ENCODE measurements at regions of chr13 and their contacts with region 1.

Region 1: DNA sequence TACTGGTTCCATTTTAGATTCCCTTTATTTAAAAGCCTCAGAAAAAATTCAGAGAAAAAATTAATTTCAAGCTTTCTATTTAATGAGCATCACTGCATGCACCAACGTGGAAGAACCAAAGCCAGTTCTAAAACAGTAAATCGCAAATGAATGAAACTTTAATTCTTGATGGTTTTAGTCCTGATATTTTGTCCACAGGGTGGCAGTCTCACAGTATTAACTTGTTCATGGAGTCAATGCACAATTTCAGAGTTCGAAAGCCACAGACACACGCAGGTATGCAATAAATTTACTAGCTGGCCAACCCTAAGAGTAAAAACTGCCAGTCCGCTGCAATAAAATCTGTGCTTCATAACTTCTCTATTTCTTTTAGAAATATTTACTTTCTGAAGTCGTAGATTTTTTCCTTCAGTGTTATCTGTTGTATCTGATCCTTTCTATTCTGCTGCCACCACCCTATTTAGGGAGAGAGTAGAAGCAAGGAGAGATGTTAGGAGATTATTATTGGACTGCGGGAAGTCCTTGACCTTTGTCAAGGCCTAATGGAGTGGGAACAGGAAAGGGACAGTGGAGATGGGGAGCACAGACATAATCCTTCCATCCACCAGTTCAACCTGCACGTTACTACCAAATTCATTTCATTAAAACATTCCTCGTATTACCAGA is 7.0 kb upstream of the WBP4 start:
- DNase-seq: peak; percentile 37
- ATAC-seq: peak; percentile 63
- H3K4me3 ChIP-seq: peak overlapping the region; percentile 22; the same call in 1 of the 2 replicates
- H3K27ac ChIP-seq: peak overlapping the region; percentile 40; the same call in 1 of the 2 replicates
- H3K4me1 ChIP-seq: peaks cover 6% of the 10 kb centered on the region; the same call in 1 of the 2 replicates
- H3K27me3 ChIP-seq: no peaks in the 10 kb centered on the region
- CTCF ChIP-seq: peak; percentile 38 to 66 (median 54); a peak in 5 of 6 replicates
- EP300 ChIP-seq: no peak
- POLR2A ChIP-seq: no peak
- RAD21 ChIP-seq: peak; percentile 59

Region 2: GRCh38 chr13:40624383-40624782 is 430.0 kb before region 1 on chr13:
- CTCF ChIA-PET with region 1: no interaction called
- POLR2A ChIA-PET with region 1: no interaction called
- RAD21 ChIA-PET with region 1: no interaction called
- SMC1A ChIA-PET with region 1: no interaction called
- in situ Hi-C with region 1: no loop called
- intact Hi-C with region 1: no loop called
- DNase-seq: no peak
- ATAC-seq: 0 out of 3 replicates have a peak, but pooled peaks have one; percentile 19
- H3K4me3 ChIP-seq: no peak overlapping the region
- H3K27ac ChIP-seq: no peak overlapping the region
- H3K4me1 ChIP-seq: peaks cover 14% of the 10 kb centered on the region
- H3K27me3 ChIP-seq: no peaks in the 10 kb centered on the region
- CTCF ChIP-seq: no peak
- EP300 ChIP-seq: no peak
- POLR2A ChIP-seq: no peak
- RAD21 ChIP-seq: no peak

Region 3: DNA sequence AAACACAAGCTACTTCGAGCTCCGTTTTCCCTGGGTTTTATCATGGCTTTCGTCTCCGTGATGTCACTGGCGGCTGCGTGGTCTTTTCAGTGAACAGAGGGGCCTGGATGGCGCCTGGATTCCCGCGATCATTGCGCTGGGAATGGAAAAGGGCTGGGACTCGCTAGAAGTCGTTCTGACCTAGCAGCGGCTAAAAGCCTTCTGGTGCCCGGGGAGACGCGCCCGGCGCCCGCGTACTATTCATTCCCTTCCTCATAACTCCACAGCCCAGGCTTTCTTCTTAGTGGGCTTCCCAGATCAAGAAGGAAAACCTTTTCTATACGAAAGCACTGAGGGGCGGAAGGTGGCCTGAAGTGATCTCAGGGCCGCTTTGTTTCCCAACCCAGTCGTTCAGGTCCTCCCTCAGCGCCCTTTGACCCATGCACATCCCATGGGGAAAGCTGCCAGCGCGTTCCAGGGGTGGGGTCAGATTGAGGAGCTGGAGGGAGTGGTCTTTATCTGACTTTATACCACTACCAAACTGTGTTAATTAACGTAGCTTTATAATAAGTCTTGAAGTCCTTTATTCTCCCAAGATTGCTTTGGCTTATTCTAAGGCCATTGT is 131.8 kb before region 1 on chr13:
- CTCF ChIA-PET with region 1: interaction called, 13 read pairs
- POLR2A ChIA-PET with region 1: no interaction called
- RAD21 ChIA-PET with region 1: interaction called, 3 read pairs
- SMC1A ChIA-PET with region 1: interaction called, 3 read pairs
- in situ Hi-C with region 1: no loop called
- intact Hi-C with region 1: no loop called
- DNase-seq: no peak
- ATAC-seq: no peak
- H3K4me3 ChIP-seq: no peak overlapping the region
- H3K27ac ChIP-seq: no peak overlapping the region
- H3K4me1 ChIP-seq: no peaks in the 10 kb centered on the region
- H3K27me3 ChIP-seq: no peaks in the 10 kb centered on the region
- CTCF ChIP-seq: no peak
- EP300 ChIP-seq: no peak
- POLR2A ChIP-seq: no peak
- RAD21 ChIP-seq: no peak

Region 4: GRCh38 chr13:40992678-40993518 is 61.4 kb before region 1 on chr13:
- CTCF ChIA-PET with region 1: interaction called, 17 read pairs
- POLR2A ChIA-PET with region 1: interaction called, 12 read pairs
- RAD21 ChIA-PET with region 1: interaction called, 11 read pairs
- SMC1A ChIA-PET with region 1: interaction called, 20 read pairs
- in situ Hi-C with region 1: no loop called
- intact Hi-C with region 1: no loop called
- DNase-seq: no peak
- ATAC-seq: peak; percentile 34
- H3K4me3 ChIP-seq: no peak overlapping the region; the same call in 1 of the 2 replicates
- H3K27ac ChIP-seq: peak overlapping the region; percentile 92
- H3K4me1 ChIP-seq: peaks cover 46% of the 10 kb centered on the region
- H3K27me3 ChIP-seq: no peaks in the 10 kb centered on the region
- CTCF ChIP-seq: peak; percentile 10 to 49 (median 12); a peak in 4 of 6 replicates
- EP300 ChIP-seq: no peak
- POLR2A ChIP-seq: no peak
- RAD21 ChIP-seq: peak; percentile 51

Region 5: GRCh38 chr13:41019011-41019487 is 35.3 kb before region 1 on chr13 and contains the start of gene ELF1:
- CTCF ChIA-PET with region 1: interaction called, 129 read pairs
- POLR2A ChIA-PET with region 1: interaction called, 25 read pairs
- RAD21 ChIA-PET with region 1: interaction called, 61 read pairs
- SMC1A ChIA-PET with region 1: interaction called, 70 read pairs
- in situ Hi-C with region 1: no loop called
- intact Hi-C with region 1: loop called (anchors 5 kb)
- DNase-seq: peak; percentile 88
- ATAC-seq: peak; percentile 79
- H3K4me3 ChIP-seq: peak within 1 kb of the TSS; percentile 90
- H3K27ac ChIP-seq: peak within 1 kb of the TSS; percentile 100
- H3K4me1 ChIP-seq: peaks cover 7% of the 10 kb centered on the region
- H3K27me3 ChIP-seq: no peaks in the 10 kb centered on the region
- CTCF ChIP-seq: no peak
- EP300 ChIP-seq: peak; percentile 78 to 95
- POLR2A ChIP-seq: peak; percentile 47
- RAD21 ChIP-seq: 0 out of 2 replicates have a peak, but pooled peaks have one; percentile 13
- polyA plus RNA-seq, gene ELF1: 43.3 to 43.5 TPM

Region 6: DNA sequence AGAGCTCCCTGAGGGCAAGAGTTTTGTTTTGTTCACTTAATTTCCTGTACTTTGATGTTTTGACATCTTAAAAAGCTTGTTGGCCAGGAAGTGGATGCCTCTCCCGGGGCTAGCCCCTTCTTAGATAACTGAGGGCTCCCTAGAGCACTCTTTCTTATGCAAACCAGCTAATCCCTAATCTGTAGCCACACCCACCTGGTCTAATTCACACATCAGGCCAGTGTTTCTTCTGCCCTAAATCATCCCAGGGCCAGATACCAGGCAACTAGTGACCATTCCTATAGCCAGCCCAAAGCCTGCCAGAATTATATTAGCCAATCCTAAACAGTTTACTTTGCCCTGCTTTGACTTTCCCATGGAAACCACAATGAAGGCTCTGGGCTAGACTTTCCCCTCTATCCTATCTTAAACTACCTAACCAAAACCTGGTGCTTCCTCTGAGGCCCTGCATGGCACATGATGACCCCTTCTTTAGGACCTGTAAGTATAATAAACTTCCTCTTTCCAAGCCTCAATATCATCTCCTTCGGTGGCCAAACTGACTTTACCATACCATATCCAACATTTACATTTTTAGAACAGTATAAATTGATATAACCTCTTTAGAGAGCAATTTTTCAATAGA is 31.7 kb after region 1 on chr13:
- CTCF ChIA-PET with region 1: interaction called, 10 read pairs
- POLR2A ChIA-PET with region 1: no interaction called
- RAD21 ChIA-PET with region 1: interaction called, 3 read pairs
- SMC1A ChIA-PET with region 1: interaction called, 3 read pairs
- in situ Hi-C with region 1: no loop called
- intact Hi-C with region 1: no loop called
- DNase-seq: no peak
- ATAC-seq: no peak
- H3K4me3 ChIP-seq: no peak overlapping the region
- H3K27ac ChIP-seq: no peak overlapping the region
- H3K4me1 ChIP-seq: no peaks in the 10 kb centered on the region
- H3K27me3 ChIP-seq: no peaks in the 10 kb centered on the region
- CTCF ChIP-seq: no peak
- EP300 ChIP-seq: no peak
- POLR2A ChIP-seq: no peak
- RAD21 ChIP-seq: no peak

Region 7: GRCh38 chr13:41231786-41232185 is 177.4 kb after region 1 on chr13:
- CTCF ChIA-PET with region 1: interaction called, 12 read pairs
- POLR2A ChIA-PET with region 1: interaction called, 3 read pairs
- RAD21 ChIA-PET with region 1: interaction called, 4 read pairs
- SMC1A ChIA-PET with region 1: interaction called, 6 read pairs
- in situ Hi-C with region 1: no loop called
- intact Hi-C with region 1: no loop called
- DNase-seq: peak; percentile 24
- ATAC-seq: peak; percentile 72
- H3K4me3 ChIP-seq: no peak overlapping the region
- H3K27ac ChIP-seq: no peak overlapping the region
- H3K4me1 ChIP-seq: peaks cover 14% of the 10 kb centered on the region
- H3K27me3 ChIP-seq: no peaks in the 10 kb centered on the region
- CTCF ChIP-seq: no peak
- EP300 ChIP-seq: no peak
- POLR2A ChIP-seq: no peak
- RAD21 ChIP-seq: no peak